SK-N-SH (cell line): ENCODE measurements at regions of chr7 and their contacts with region 1.

Region 1: GRCh38 chr7:25098096-25099046 is 26.7 kb downstream of the CYCS start:
- DNase-seq: peak; percentile 80
- H3K4me3 ChIP-seq: peak overlapping the region in 1 of 2 experiments; percentile 16; a peak in 1 of 4 replicates
- H3K27ac ChIP-seq: no peak overlapping the region
- H3K4me1 ChIP-seq: peaks cover 0 to 3% of the 10 kb centered on the region in 2 experiments; a peak in 1 of 4 replicates
- H3K27me3 ChIP-seq: no peaks in the 10 kb centered on the region
- CTCF ChIP-seq: peak; percentile 100
- EP300 ChIP-seq: no peak
- RAD21 ChIP-seq: peak; percentile 90

Region 2: DNA sequence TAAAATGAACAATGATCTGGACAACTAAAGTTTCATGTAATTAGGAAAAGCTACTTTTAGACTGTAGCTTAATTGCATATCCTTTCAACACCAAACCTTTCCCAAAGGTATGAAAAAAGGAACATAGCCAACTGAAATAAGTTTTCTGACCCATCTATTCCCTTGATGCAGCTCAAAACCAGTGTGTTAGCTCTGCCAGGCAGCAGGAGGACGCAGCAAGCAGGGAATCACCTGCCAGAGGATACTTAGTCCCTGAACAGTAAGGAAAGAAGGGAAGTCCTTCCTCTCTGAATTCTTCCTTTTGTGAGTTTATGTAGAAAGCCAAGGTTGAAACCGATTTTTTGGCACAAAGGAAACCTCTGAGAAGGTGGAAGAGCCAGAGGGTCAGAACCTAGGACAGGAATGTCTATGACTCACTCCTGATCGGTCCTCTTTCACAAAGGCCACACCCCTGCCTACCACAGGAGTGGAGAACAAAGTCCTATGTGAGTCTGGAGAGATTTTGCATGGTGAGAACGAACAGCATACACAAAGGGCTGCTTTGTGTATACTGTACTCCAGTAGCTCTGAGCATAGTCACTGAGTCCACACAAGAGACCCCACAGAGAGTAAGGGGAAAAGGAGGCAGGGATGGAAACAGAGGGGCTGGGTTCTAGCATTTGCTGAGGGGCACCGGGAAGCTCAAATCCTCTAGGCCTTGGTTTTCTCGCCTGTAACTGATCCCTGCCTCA is 272.3 kb before region 1 on chr7:
- CTCF ChIA-PET with region 1: interaction called, 88 read pairs
- POLR2A ChIA-PET with region 1: no interaction called
- DNase-seq: no peak
- H3K4me3 ChIP-seq: no peak overlapping the region
- H3K27ac ChIP-seq: peak overlapping the region; percentile 72 to 95; a peak in 3 of 4 replicates
- H3K4me1 ChIP-seq: peaks cover 24 to 60% of the 10 kb centered on the region in 2 experiments
- H3K27me3 ChIP-seq: no peaks in the 10 kb centered on the region
- CTCF ChIP-seq: no peak
- EP300 ChIP-seq: peak in 1 of 2 experiments; percentile 35; a peak in 1 of 4 replicates
- RAD21 ChIP-seq: no peak

Region 3: GRCh38 chr7:25054819-25055519 is 43.4 kb before region 1 on chr7:
- CTCF ChIA-PET with region 1: interaction called, 10 read pairs
- POLR2A ChIA-PET with region 1: no interaction called
- DNase-seq: no peak
- H3K4me3 ChIP-seq: no peak overlapping the region
- H3K27ac ChIP-seq: no peak overlapping the region
- H3K4me1 ChIP-seq: no peaks in the 10 kb centered on the region
- H3K27me3 ChIP-seq: no peaks in the 10 kb centered on the region
- CTCF ChIP-seq: no peak
- EP300 ChIP-seq: no peak
- RAD21 ChIP-seq: no peak

Region 4: GRCh38 chr7:25075459-25075858 is 22.9 kb before region 1 on chr7:
- CTCF ChIA-PET with region 1: interaction called, 115 read pairs
- POLR2A ChIA-PET with region 1: no interaction called
- DNase-seq: no peak
- H3K4me3 ChIP-seq: no peak overlapping the region
- H3K27ac ChIP-seq: no peak overlapping the region
- H3K4me1 ChIP-seq: peaks cover 0 to 3% of the 10 kb centered on the region in 2 experiments; a peak in 1 of 4 replicates
- H3K27me3 ChIP-seq: no peaks in the 10 kb centered on the region
- CTCF ChIP-seq: no peak
- EP300 ChIP-seq: no peak
- RAD21 ChIP-seq: no peak

Region 5: GRCh38 chr7:25117226-25118047 is 19.1 kb after region 1 on chr7:
- CTCF ChIA-PET with region 1: interaction called, 68 read pairs
- POLR2A ChIA-PET with region 1: no interaction called
- DNase-seq: no peak
- H3K4me3 ChIP-seq: no peak overlapping the region
- H3K27ac ChIP-seq: no peak overlapping the region
- H3K4me1 ChIP-seq: peaks cover 0 to 4% of the 10 kb centered on the region in 2 experiments; a peak in 1 of 4 replicates
- H3K27me3 ChIP-seq: no peaks in the 10 kb centered on the region
- CTCF ChIP-seq: no peak
- EP300 ChIP-seq: no peak
- RAD21 ChIP-seq: no peak

Region 6: GRCh38 chr7:25158966-25159365 is 60.6 kb after region 1 on chr7:
- CTCF ChIA-PET with region 1: interaction called, 12 read pairs
- POLR2A ChIA-PET with region 1: no interaction called
- DNase-seq: no peak
- H3K4me3 ChIP-seq: no peak overlapping the region
- H3K27ac ChIP-seq: no peak overlapping the region
- H3K4me1 ChIP-seq: no peaks in the 10 kb centered on the region; a peak in 1 of 4 replicates
- H3K27me3 ChIP-seq: no peaks in the 10 kb centered on the region
- CTCF ChIP-seq: no peak
- EP300 ChIP-seq: no peak
- RAD21 ChIP-seq: no peak